Common myeloid progenitor, CD34-positive (primary cell): ENCODE measurements at regions of chr5 and their contacts with region 1.

Region 1: GRCh38 chr5:135356522-135357318 is 42.3 kb downstream of the MACROH2A1 start:
- DNase-seq: no peak
- H3K4me3 ChIP-seq: peak overlapping the region in 2 of 7 experiments; percentile 15 to 17
- H3K27ac ChIP-seq: peak overlapping the region in 1 of 2 experiments; percentile 46
- H3K4me1 ChIP-seq: peaks cover 13 to 92% (median 67%) of the 10 kb centered on the region in 4 experiments
- H3K27me3 ChIP-seq: no peaks in the 10 kb centered on the region

Region 2: DNA sequence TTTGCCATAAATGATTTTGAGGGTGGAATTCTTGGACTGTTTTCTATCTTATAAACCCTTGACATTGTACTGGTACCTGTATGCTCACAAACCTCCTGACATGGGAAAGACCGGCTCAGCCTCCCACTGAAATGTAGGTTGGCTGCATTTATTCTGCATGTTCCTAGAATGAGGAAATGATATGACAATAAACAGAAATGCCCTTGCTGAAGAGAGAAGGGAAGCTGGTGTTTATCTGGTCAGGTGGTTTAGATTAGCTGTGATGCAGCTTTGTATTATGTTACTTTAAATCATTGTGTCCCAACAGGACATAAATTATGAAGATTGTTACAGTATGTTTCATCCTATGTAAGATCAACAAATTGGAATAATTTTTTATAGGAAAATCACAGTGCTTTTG is 412.1 kb before region 1 on chr5:
- CTCF ChIA-PET with region 1: no interaction called
- POLR2A ChIA-PET with region 1: no interaction called
- DNase-seq: peak in 2 of 3 donors; percentile 24 to 51
- H3K4me3 ChIP-seq: no peak overlapping the region
- H3K27ac ChIP-seq: no peak overlapping the region
- H3K4me1 ChIP-seq: no peaks in the 10 kb centered on the region
- H3K27me3 ChIP-seq: no peaks in the 10 kb centered on the region

Region 3: GRCh38 chr5:135332519-135333150 is 24.1 kb before region 1 on chr5:
- CTCF ChIA-PET with region 1: no interaction called
- POLR2A ChIA-PET with region 1: no interaction called
- DNase-seq: peak; percentile 49 to 69 (median 67)
- H3K4me3 ChIP-seq: no peak overlapping the region
- H3K27ac ChIP-seq: no peak overlapping the region
- H3K4me1 ChIP-seq: no peaks in the 10 kb centered on the region
- H3K27me3 ChIP-seq: no peaks in the 10 kb centered on the region

Region 4: GRCh38 chr5:135345956-135346731 is 10.6 kb before region 1 on chr5:
- CTCF ChIA-PET with region 1: interaction called, 12 read pairs
- POLR2A ChIA-PET with region 1: no interaction called
- DNase-seq: peak in 2 of 3 donors; percentile 51 to 65
- H3K4me3 ChIP-seq: no peak overlapping the region
- H3K27ac ChIP-seq: no peak overlapping the region
- H3K4me1 ChIP-seq: peaks cover 0 to 39% (median 22%) of the 10 kb centered on the region in 4 experiments
- H3K27me3 ChIP-seq: no peaks in the 10 kb centered on the region

Region 5: DNA sequence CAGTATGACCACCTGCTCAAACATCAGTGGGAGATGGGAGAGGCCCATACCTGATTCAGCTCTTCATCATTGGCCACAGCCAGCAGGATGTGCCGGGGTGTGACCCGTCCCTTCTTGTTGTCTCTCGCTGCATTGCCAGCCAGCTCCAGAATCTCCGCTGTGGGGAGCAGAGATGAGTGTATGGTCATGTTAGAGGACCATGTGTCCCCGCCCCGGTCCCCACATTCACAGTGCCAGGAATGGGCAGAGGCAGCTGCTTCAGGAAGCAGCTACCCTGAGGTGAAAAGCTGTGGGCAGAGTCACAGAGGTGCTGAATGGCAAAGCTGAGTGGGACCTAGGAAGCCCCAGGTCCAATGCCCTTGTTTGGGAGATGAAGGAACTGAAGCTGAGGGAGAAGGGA is 13.3 kb after region 1 on chr5:
- CTCF ChIA-PET with region 1: interaction called, 15 read pairs
- POLR2A ChIA-PET with region 1: no interaction called
- DNase-seq: no peak
- H3K4me3 ChIP-seq: peak overlapping the region in 1 of 7 experiments; percentile 8
- H3K27ac ChIP-seq: peak overlapping the region in 1 of 2 experiments; percentile 67
- H3K4me1 ChIP-seq: peaks cover 35 to 99% (median 89%) of the 10 kb centered on the region in 4 experiments
- H3K27me3 ChIP-seq: no peaks in the 10 kb centered on the region